ENCODE measurements at regions of chr19 and their contacts with region 1.

Region 1: DNA sequence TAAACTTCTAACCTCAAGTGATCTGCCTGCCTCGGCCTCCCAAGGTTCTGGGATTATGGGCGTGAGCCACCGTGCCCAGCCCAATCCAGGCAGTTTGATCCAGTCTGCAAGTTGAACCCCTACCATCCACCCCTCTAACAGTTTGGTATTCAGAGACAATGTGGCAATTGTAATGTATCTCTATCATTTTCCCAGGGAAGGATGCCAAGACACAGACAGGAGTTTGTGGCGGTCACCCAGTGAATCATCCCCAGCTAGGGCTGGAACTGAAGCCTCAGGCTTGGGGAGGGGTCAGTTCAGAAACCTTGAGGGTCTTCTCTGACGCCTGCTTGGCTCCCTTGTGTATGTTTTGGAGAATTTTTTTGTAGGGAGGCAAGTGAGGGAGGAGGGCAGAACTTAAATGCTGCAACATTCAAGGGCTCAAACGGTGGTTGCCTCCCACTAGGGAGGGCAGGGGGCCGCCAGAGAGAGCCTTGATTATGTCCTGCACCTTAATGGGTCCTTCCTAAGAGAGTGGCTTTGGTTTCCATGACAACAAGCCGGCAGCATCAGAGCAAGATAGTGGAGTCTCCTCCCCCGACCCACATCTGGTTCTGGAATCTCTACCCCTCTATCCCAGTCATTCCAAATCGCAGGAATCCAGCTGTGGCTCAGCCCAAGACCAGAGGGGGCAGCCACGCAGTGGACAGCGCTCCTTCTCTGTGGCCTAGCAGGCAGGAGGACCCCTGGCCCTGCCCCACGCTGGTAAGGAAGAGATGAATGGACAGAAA is 14.9 kb upstream of the FEM1A start:
- DNase-seq: no peak
- ATAC-seq: no peak
- H3K4me3 ChIP-seq: no peak overlapping the region
- H3K27ac ChIP-seq: no peak overlapping the region
- H3K4me1 ChIP-seq: no peaks in the 10 kb centered on the region
- H3K27me3 ChIP-seq: no peaks in the 10 kb centered on the region
- CTCF ChIP-seq: no peak
- POLR2A ChIP-seq: no peak

Region 2: DNA sequence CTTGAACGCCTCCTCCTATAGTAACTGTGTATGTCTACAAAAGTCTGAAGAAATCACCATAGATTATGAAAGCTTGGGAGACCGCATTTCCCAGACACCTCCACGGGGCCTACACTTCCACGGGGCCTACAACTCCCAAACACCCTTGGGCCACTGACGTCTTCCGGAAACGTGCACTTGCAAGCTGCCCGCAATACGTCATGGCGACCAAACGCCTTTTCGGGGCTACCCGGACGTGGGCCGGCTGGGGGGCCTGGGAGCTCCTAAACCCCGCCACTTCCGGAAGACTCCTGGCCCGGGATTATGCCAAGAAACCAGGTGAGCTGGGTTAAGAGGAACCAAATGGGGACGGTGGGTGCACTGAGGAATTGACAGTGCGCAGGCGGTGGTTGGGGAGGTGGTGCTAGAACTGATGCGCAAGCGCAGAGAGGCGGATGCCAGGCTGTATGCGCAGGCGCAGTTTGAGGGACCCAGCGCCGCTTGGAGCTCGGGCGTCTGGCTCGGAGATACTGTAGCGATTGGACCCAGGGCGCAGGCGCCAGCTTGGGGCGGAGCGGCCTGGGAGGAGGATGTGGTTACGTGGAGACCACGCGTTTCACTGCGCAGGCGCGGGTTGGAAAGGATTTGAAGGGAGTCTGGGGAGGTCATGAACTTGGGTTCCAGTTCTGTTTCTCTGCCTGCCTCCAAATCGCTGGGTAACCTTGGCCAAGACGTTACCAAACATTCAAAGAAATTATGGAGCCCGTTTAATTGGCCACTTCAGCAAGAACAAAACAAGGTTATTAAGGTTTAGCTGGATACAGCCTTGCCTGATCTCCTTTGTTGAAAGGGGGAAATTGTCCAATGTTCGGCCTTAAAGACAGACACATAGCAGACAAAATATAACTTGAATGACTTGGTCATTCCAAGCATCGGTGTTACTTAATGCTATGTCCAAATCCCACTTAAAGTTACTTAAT is 1013.8 kb before region 1 on chr19 and contains the start of gene MRPL54:
- in situ Hi-C with region 1: no loop called
- intact Hi-C with region 1: no loop called
- DNase-seq: peak; percentile 98 to 99
- ATAC-seq: peak; percentile 95 to 96
- H3K4me3 ChIP-seq: peak within 1 kb of the TSS; percentile 83 to 97 (median 90)
- H3K27ac ChIP-seq: peak within 1 kb of the TSS; percentile 92 to 100 (median 98)
- H3K4me1 ChIP-seq: peaks cover 21 to 22% of the 10 kb centered on the region in 2 donors
- H3K27me3 ChIP-seq: no peaks in the 10 kb centered on the region
- CTCF ChIP-seq: no peak
- POLR2A ChIP-seq: peak; percentile 68 to 78
- total RNA-seq, gene MRPL54: 23.3 to 86.3 (median 63.3) TPM

Region 3: GRCh38 chr19:4557971-4558941 is 218.4 kb before region 1 on chr19:
- in situ Hi-C with region 1: no loop called
- intact Hi-C with region 1: loop called (anchors 10 kb)
- DNase-seq: no peak
- ATAC-seq: no peak
- H3K4me3 ChIP-seq: peak overlapping the region in 3 of 4 donors; percentile 36 to 54 (median 49)
- H3K27ac ChIP-seq: peak overlapping the region; percentile 33 to 81 (median 70)
- H3K4me1 ChIP-seq: no peaks in the 10 kb centered on the region
- H3K27me3 ChIP-seq: no peaks in the 10 kb centered on the region
- CTCF ChIP-seq: peak; percentile 92 to 100 (median 97)
- POLR2A ChIP-seq: no peak

Region 4: DNA sequence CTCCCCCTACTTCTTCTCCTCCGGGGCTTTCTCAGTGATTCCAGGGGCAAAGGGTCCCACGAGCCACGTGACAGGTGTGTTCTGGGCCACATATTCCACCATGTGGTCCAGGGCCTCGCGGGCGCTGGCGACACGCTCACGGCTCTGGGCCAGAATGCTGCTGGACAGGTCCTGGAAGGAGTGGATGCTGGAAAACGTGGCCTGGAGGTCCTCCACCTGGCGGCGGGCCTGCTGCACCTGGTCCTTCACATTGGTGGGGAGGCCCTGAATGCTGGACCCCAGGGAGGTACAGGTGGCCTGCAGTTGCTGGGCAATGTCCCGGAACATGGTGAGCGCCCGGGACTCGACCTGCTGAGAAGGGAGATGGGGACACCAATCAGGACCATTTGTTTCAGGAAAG is 62.6 kb after region 1 on chr19:
- in situ Hi-C with region 1: no loop called
- intact Hi-C with region 1: loop called (anchors 2 kb)
- DNase-seq: no peak
- ATAC-seq: no peak
- H3K4me3 ChIP-seq: no peak overlapping the region
- H3K27ac ChIP-seq: no peak overlapping the region
- H3K4me1 ChIP-seq: peaks cover 0 to 4% of the 10 kb centered on the region in 2 donors
- H3K27me3 ChIP-seq: no peaks in the 10 kb centered on the region
- CTCF ChIP-seq: no peak
- POLR2A ChIP-seq: no peak

Region 5: DNA sequence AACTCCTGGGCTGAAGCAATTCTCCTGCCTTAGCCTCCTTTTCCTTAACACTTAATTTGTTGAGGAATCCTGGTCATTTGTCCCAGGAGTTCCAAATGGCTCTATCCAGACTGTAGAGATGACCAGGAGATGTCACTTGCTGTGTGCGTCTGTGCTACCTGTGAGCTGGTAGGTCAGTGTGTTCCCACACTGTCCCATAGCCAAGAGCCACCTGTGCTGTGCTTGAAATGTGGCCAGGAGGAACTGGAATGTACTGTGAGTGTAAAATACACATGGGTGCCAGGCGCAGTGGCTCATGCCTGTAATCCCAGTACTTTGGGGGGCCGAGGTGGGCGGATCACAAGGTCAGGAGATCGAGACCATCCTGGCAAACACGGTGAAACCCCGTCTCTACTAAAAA is 162.8 kb after region 1 on chr19:
- in situ Hi-C with region 1: no loop called
- intact Hi-C with region 1: no loop called
- DNase-seq: no peak
- ATAC-seq: no peak
- H3K4me3 ChIP-seq: no peak overlapping the region
- H3K27ac ChIP-seq: no peak overlapping the region
- H3K4me1 ChIP-seq: no peaks in the 10 kb centered on the region
- H3K27me3 ChIP-seq: no peaks in the 10 kb centered on the region
- CTCF ChIP-seq: no peak
- POLR2A ChIP-seq: no peak